Right cardiac atrium (tissue), 5 donors: ENCODE measurements at regions of chr15 and their contacts with region 1.

Region 1: DNA sequence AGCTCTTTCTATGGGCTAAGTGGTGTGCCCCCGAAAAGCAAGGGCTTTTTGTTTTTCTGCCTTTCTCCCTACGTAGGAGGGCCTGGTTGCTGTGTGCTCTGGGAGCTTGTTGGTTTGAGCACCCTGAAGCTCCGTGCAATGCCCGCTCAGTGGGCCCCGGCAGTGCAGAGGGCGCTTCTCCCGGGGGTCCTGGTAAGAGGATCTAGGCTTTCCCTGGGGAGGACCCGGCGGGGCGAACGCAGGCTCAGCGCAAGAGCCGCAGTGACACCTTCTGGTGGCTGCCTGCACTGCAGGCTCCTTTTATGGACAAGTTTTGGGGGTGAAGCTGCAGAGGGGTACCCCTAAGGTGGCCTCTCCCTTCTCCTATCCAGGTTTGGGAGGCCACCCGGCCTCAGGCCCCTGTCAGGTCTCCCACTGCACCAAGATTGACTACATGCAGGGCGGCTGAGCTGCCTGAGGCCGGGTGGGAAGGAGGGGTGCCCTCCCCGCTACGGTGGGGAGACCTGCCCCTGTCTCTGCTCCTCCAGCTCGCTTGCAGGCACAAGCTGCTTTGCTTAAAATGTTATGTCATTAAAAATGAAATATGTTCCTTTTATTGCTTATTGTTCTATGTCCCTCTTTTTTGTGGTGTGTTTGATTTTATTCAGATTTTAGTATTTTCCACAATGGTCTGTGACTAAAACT is 387.9 kb downstream of the GABRG3 start:
- DNase-seq: peak in 2 of 3 donors; percentile 28 to 69
- ATAC-seq: peak in 1 of 2 donors; percentile 46
- H3K4me3 ChIP-seq: no peak overlapping the region
- H3K27ac ChIP-seq: no peak overlapping the region
- H3K4me1 ChIP-seq: no peaks in the 10 kb centered on the region
- H3K27me3 ChIP-seq: no peaks in the 10 kb centered on the region

Region 2: DNA sequence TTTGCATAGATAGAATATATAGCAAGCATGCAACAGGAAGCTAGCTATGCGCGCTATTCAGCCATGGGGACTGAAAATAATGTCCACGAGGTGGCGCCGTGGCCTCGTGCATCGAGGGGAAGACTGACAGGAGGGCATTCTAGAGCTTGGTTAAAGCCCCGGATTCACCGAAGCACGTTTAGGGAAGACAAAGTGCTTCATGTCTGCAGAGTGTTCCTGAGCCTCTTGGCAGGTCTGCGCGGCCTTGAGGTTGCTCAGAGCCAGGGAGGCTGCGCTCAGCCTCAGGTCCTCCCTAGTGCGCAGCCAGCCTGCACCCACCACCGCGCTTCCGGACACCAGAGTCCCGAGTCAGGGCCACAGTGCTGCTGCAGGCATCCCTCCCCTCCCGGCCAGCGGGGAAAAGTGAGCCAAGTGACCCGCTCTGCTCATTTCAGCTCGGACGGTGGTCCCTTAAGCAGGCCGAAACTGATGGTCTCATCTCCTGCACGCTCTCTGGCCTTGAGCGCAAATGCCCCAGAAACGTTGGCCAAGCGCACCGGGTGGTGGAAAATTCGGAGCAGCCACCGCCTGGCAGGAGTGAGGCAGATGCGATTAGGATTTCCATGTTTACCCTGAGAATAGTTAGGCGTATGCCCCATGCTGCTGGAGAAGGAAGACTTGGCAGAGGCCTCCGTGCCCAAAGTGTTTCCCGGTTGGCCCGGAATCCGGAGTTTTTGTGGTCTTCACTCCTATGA is 467.3 kb before region 1 on chr15:
- intact Hi-C with region 1: loop called in 3 of 4 experiments (anchors 5 kb)
- DNase-seq: peak; percentile 45 to 78 (median 76)
- ATAC-seq: peak; percentile 67 to 76
- H3K4me3 ChIP-seq: peak overlapping the region; percentile 0
- H3K27ac ChIP-seq: no peak overlapping the region
- H3K4me1 ChIP-seq: no peaks in the 10 kb centered on the region
- H3K27me3 ChIP-seq: no peaks in the 10 kb centered on the region

Region 3: DNA sequence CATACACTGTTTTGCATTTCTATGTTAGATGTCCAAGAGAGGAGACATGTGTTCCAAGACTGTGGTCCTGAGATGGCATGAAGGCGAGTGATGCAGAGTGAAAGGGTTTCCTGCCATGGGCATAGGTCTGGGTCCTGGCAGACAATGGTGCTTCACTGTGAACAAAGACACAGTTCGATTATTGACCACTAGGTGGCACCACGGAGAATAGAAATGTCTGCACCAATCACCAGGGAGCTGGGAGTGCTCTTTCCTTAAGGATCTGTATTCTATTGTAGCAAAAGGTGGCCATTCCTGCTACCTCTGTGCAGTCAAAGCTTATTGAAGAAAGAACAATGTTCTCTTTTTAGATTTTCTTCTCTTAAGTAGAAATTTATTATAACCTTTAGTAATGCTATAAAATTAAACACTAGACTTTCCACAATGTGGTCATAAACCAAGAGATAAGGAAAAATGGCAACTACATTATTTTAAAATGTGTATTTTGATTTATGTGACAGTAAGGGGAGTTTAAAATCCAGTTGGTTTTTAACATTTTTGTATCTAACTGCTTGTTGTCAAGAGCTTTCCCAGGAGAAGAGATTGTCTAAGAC is 299.2 kb before region 1 on chr15:
- intact Hi-C with region 1: loop called in 1 of 4 experiments (anchors 10 kb)
- DNase-seq: no peak
- ATAC-seq: peak; percentile 29 to 86
- H3K4me3 ChIP-seq: no peak overlapping the region
- H3K27ac ChIP-seq: no peak overlapping the region
- H3K4me1 ChIP-seq: no peaks in the 10 kb centered on the region
- H3K27me3 ChIP-seq: no peaks in the 10 kb centered on the region